ENCODE measurements at regions of chr9 and their contacts with region 1.

Region 1: DNA sequence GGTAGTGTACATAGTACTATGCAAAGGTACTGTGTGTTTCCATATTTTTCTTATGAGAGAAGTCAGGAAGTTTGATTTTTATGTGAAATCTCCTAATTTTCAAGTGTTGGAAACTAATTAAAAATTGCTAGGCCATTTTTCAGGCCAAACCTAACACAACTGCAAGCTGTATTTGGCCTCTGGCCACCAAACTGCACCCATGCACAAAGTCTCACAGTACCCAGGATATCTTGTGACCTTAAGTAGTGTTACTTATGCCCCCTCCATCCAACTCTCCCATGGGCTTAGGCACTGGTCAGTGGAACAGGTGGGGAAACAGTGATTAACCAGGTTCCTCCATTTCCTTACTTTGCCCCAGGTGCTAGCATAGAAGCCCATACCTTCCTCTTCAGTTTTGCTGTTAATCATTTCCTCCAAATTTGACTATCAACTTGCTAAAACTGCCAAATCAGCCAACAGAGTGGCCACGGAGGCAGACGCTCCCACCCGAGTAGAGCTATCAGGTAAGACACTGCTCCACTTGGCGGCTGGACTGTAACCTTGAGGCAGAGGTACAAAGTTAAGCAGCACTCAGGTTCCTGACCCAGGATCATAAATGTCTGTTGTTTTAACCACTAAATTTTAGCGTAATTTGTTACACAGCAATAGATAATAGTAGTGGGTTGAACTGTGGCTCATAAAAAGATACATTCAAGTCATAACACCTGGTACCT is 19.5 kb upstream of the KIF27 start:
- DNase-seq: no peak
- ATAC-seq: no peak
- H3K4me3 ChIP-seq: no peak overlapping the region
- H3K27ac ChIP-seq: no peak overlapping the region
- H3K4me1 ChIP-seq: peaks cover 5% of the 10 kb centered on the region
- H3K27me3 ChIP-seq: no peaks in the 10 kb centered on the region
- CTCF ChIP-seq: no peak
- POLR2A ChIP-seq: no peak

Region 2: GRCh38 chr9:84061594-84062193 is 120.9 kb after region 1 on chr9:
- intact Hi-C with region 1: no loop called
- DNase-seq: no peak
- ATAC-seq: no peak
- H3K4me3 ChIP-seq: no peak overlapping the region
- H3K27ac ChIP-seq: no peak overlapping the region
- H3K4me1 ChIP-seq: peaks cover 12% of the 10 kb centered on the region
- H3K27me3 ChIP-seq: no peaks in the 10 kb centered on the region
- CTCF ChIP-seq: no peak
- POLR2A ChIP-seq: no peak

Region 3: GRCh38 chr9:84170521-84171141 is 229.9 kb after region 1 on chr9:
- intact Hi-C with region 1: loop called (anchors 10 kb)
- DNase-seq: peak; percentile 72 to 93 (median 86)
- ATAC-seq: peak; percentile 95
- H3K4me3 ChIP-seq: no peak overlapping the region
- H3K27ac ChIP-seq: peak overlapping the region in 3 of 4 donors; percentile 58 to 75 (median 69)
- H3K4me1 ChIP-seq: no peaks in the 10 kb centered on the region
- H3K27me3 ChIP-seq: no peaks in the 10 kb centered on the region
- CTCF ChIP-seq: peak in 4 of 7 experiments; percentile 9 to 25 (median 23)
- POLR2A ChIP-seq: peak in 1 of 3 donors; percentile 34

Region 4: DNA sequence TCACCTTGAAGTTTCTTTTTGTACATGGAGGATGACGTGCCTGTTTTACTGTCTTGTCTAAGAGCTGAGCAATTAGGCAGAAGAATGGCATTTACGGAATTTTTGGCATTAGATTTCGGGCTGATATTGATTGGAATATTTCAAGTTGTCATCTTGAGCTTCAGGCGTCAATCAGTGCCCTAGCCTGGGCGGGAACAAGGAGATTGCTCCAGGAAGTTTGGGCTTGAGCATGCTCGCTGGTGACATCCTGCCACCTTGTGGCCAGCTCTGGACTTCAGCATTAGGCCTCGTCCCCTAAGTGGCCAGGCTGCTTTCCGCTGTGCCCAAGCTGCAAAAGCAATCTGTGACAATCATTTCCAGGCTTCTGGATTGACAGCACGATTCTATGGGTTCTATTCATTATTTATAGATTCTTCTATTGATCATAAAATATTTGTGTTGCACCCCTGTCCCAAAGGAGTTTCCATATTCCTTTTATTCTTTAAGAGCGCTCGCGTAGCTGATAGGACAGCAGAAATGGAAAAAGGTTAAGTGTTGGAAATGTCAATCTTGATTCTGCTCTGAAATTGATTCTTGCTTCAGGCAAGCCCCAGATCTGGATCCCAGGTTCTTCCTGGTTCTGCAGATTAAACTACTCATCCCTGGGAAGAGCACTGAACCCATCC is 320.5 kb after region 1 on chr9:
- intact Hi-C with region 1: loop called (anchors 5 kb)
- DNase-seq: peak; percentile 80 to 86 (median 82)
- ATAC-seq: peak; percentile 95
- H3K4me3 ChIP-seq: no peak overlapping the region
- H3K27ac ChIP-seq: no peak overlapping the region
- H3K4me1 ChIP-seq: no peaks in the 10 kb centered on the region
- H3K27me3 ChIP-seq: no peaks in the 10 kb centered on the region
- CTCF ChIP-seq: peak; percentile 82 to 93 (median 87)
- POLR2A ChIP-seq: no peak

Measured in body of pancreas (tissue), 4 donors.